Activated naive CD4-positive, alpha-beta T cell treated with anti-CD3 and anti-CD28 coated beads for 36 hours (primary cell): ENCODE measurements at regions of chr14 and their contacts with region 1.

Region 1: DNA sequence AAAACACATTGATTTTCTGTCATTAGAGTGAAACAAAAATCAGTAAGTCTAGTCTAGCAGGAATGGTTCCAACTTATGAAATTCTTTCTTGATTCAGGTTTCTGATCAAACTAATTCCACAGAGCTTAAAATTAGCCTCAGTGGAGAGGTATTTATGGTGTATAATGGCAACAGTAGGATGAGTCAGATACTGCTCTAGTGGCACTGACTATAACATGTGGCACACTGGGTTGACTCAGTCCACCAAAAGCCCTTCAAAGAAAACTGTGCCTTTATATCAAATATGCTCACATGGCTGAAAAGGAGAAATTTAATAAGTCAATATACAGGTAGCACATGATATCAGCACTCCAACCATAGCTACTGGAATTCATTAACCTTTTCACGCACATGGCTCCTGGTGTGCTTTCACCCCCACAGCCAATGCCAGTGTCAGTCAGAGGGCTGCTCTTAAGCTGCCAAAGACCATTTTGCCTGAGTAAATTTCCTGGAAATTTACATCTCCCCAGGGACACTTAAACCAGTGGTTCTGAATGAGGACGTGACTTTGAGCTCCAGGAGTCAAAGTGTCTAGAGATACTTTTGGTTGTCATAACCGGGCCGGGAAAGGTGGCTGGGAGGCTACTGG is 21.7 kb upstream of the CATSPERB start:
- DNase-seq: no peak
- H3K4me3 Mint-ChIP-seq: no peak overlapping the region
- H3K27ac Mint-ChIP-seq: no peak overlapping the region
- H3K4me1 Mint-ChIP-seq: no peaks in the 10 kb centered on the region
- H3K27me3 Mint-ChIP-seq: no peaks in the 10 kb centered on the region

Region 2: DNA sequence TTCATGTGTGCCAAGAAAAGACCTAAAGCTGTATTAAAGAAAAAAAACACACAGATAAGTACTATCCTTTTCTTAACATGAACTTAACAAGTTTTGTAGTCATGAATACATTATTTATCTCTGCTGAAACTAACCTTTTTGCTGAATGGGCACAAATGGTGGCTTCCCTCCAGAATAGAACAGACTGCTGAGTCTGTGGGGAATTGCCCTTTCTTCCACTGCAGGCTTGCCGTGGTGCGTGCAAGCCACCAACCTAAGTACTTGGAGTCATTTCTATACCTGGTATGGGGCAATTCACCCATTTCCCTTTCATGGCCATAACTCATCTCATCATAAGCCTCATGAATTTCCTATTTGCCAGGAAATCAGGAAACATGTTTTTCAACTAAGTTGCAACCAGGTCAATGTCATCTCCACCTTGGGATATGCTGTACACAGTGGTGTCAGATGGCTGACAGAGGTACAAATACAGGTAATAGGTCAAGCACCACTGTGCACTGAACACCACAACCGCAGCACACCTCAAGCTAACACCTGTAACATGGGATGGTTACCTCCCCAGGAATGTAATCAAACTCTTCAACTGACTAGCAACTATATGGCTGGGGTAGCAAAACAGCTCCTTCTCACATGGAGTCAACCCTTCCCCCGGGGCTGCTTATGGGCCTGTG is 71.6 kb before region 1 on chr14:
- CTCF ChIA-PET with region 1: no interaction called
- intact Hi-C with region 1: loop called (anchors 5 kb)
- DNase-seq: peak; percentile 33
- H3K4me3 Mint-ChIP-seq: no peak overlapping the region
- H3K27ac Mint-ChIP-seq: no peak overlapping the region
- H3K4me1 Mint-ChIP-seq: peaks cover 15% of the 10 kb centered on the region
- H3K27me3 Mint-ChIP-seq: no peaks in the 10 kb centered on the region

Region 3: DNA sequence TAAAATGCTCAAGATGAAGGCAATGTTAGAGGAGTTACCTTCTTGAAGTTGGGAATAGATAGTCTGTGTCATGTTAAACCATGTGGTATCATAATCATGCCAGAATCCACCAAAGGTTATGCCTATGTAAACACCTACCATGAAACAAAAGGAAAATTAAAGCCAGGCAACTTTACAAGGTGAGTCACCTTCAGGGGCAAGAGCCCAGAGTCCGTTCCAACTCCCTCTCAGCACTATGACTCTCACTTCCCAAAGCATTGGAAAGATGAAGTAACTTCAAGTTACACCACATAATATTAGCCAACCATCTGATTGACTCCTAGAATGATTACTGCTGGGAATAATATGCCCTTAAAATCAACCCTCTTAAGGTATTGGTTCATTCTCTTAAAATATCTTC is 60.3 kb before region 1 on chr14:
- CTCF ChIA-PET with region 1: no interaction called
- intact Hi-C with region 1: no loop called
- DNase-seq: no peak
- H3K4me3 Mint-ChIP-seq: no peak overlapping the region
- H3K27ac Mint-ChIP-seq: no peak overlapping the region
- H3K4me1 Mint-ChIP-seq: peaks cover 5% of the 10 kb centered on the region
- H3K27me3 Mint-ChIP-seq: no peaks in the 10 kb centered on the region